ENCODE measurements at regions of chr3 and their contacts with region 1.

Region 1: DNA sequence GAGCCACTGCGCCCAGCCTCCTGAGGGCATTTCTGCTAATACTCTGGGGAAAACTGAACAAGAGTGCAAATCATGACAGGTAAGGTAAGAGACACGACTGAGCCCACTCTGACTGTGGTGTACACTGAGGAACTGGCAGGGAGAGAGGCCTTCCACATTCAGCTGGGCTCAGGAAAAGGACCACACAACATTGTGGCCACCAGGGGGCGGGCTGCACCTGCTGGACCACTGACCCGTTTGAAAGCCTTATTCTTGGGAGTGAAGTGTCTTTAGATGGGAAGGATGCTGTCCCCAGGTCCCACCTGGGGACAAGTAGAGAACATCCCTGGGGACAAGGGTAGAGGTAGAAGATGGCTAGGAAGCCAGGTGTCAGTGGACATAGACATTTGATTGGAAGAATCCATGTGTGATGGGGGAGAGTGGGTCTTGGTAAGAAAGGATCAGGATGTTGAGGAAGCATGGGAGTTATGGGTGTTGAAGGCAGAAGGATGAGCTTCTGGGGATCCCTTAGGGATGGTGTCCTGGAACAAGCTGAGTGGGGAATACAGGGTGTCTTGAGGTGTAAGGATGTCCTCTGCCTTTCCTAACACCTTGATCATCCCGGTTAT is 6.2 kb upstream of the CTDSPL start:
- DNase-seq: peak; percentile 81
- ATAC-seq: peak; percentile 77
- H3K4me3 ChIP-seq: no peak overlapping the region
- H3K27ac ChIP-seq: no peak overlapping the region
- H3K4me1 ChIP-seq: peaks cover 4% of the 10 kb centered on the region; the same call in 1 of the 2 replicates
- H3K27me3 ChIP-seq: 0 out of 2 replicates have a peak, but pooled peaks cover 10% of the 10 kb centered on the region
- CTCF ChIP-seq: peak; percentile 95

Region 2: GRCh38 chr3:37967260-37967881 is 111.9 kb after region 1 on chr3:
- CTCF ChIA-PET with region 1: interaction called, 18 read pairs
- POLR2A ChIA-PET with region 1: no interaction called
- intact Hi-C with region 1: loop called (anchors 1 kb)
- DNase-seq: peak; percentile 76
- ATAC-seq: peak; percentile 96
- H3K4me3 ChIP-seq: no peak overlapping the region
- H3K27ac ChIP-seq: no peak overlapping the region
- H3K4me1 ChIP-seq: no peaks in the 10 kb centered on the region
- H3K27me3 ChIP-seq: no peaks in the 10 kb centered on the region
- CTCF ChIP-seq: peak; percentile 94

Region 3: DNA sequence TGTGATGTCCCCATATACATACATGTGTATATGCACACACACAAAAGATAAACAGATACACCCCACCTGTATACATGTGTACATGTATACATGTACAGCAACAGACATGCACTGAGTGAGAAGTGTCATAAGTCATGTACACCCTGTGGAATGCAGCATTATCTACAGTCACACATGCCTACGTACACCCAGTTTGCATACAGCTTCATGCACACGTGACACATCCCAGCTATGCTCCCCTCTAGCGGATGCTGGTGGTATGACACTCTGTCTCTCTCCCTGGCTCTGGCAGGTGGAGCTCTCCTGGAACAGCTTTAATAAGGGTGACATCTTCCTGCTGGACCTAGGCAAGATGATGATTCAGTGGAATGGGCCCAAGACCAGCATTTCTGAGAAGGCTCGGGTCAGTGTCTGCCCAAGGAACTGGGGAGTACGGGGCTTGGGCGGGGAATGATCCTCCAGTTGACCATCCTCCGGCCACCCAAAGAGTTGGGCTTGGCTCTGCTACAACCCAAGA is 141.4 kb after region 1 on chr3:
- CTCF ChIA-PET with region 1: interaction called, 8 read pairs
- POLR2A ChIA-PET with region 1: no interaction called
- intact Hi-C with region 1: loop called (anchors 1 kb)
- DNase-seq: peak; percentile 96
- ATAC-seq: peak; percentile 62
- H3K4me3 ChIP-seq: no peak overlapping the region
- H3K27ac ChIP-seq: no peak overlapping the region
- H3K4me1 ChIP-seq: peaks cover 21% of the 10 kb centered on the region
- H3K27me3 ChIP-seq: no peaks in the 10 kb centered on the region
- CTCF ChIP-seq: peak; percentile 93